ENCODE measurements at regions of chr1 and their contacts with region 1.

Region 1: GRCh38 chr1:223531742-223532341 is 133.7 kb downstream of the CAPN8 start:
- DNase-seq: peak; percentile 65
- ATAC-seq: peak; percentile 42
- H3K4me3 Mint-ChIP-seq: no peak overlapping the region
- H3K27ac Mint-ChIP-seq: no peak overlapping the region
- H3K4me1 Mint-ChIP-seq: no peaks in the 10 kb centered on the region
- H3K27me3 Mint-ChIP-seq: peaks cover 25% of the 10 kb centered on the region

Region 2: GRCh38 chr1:223549740-223550139 is 17.9 kb after region 1 on chr1:
- CTCF ChIA-PET with region 1: interaction called, 11 read pairs
- POLR2A ChIA-PET with region 1: no interaction called
- DNase-seq: no peak
- ATAC-seq: no peak
- H3K4me3 Mint-ChIP-seq: no peak overlapping the region
- H3K27ac Mint-ChIP-seq: no peak overlapping the region
- H3K4me1 Mint-ChIP-seq: no peaks in the 10 kb centered on the region
- H3K27me3 Mint-ChIP-seq: peaks cover 8% of the 10 kb centered on the region

Region 3: GRCh38 chr1:223683586-223684487 is 152.0 kb after region 1 on chr1:
- CTCF ChIA-PET with region 1: interaction called, 10 read pairs
- POLR2A ChIA-PET with region 1: no interaction called
- DNase-seq: peak; percentile 71
- ATAC-seq: peak; percentile 64
- H3K4me3 Mint-ChIP-seq: no peak overlapping the region
- H3K27ac Mint-ChIP-seq: no peak overlapping the region
- H3K4me1 Mint-ChIP-seq: no peaks in the 10 kb centered on the region
- H3K27me3 Mint-ChIP-seq: peaks cover 30% of the 10 kb centered on the region

Measured in activated CD8-positive, alpha-beta T cell treated with anti-CD3 and anti-CD28 coated beads, Interleukin-2, amount 10 ng/mL, durations not matched to agents 7 days and 5 days (primary cell).